Lower leg skin (tissue), 4 donors: ENCODE measurements at regions of chr3 and their contacts with region 1.

Region 1: GRCh38 chr3:144128108-144128892 is 156.7 kb downstream of the DIPK2A start:
- DNase-seq: no peak
- H3K4me3 ChIP-seq: no peak overlapping the region
- CTCF ChIP-seq: no peak
- POLR2A ChIP-seq: no peak

Region 2: DNA sequence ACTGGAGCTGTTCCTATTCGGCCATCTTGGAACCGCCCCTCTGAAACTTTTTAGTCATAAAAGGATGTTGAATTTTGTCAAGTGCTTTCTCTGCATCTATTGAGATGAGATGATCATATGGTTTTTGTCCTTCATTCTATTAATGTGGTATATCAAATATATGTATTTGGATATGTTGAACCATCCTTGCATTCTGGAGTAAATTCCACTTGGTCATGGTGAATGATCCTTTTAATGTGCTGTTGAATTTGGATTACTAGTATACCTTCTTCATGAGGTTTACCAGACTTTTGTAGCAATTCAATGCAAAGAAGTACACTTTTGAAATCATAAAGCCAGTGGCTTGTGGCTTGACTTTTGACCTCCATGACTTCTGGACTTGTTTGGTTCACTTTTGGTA is 1647.1 kb before region 1 on chr3:
- intact Hi-C with region 1: no loop called
- DNase-seq: no peak
- H3K4me3 ChIP-seq: no peak overlapping the region
- CTCF ChIP-seq: no peak
- POLR2A ChIP-seq: no peak

Region 3: GRCh38 chr3:143119009-143119914 is 1009.0 kb before region 1 on chr3 and contains the start of gene CHST2:
- intact Hi-C with region 1: no loop called
- DNase-seq: peak in 1 of 2 donors; percentile 86
- H3K4me3 ChIP-seq: peak within 1 kb of the TSS; percentile 54
- CTCF ChIP-seq: no peak
- POLR2A ChIP-seq: no peak
- total RNA-seq, gene CHST2: 2.2 to 14.7 (median 4.4) TPM

Region 4: DNA sequence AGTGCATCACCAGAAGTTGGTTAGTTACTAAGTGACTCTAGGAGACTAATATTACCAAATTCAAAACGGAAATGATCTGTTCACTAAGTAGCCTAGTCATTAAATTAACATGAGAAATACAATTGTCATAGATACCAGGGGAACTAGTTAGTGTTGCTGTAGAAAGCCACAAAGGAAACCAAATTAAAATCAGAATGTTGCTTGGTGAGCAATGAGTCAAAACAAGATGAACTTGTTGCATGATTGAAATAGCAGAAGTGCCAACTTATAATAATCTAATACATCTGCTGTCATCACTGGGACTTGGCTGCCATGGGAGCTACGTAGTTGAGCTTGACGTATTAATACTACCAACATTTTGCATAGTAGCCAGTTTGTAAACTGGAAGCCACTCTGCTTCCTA is 301.4 kb after region 1 on chr3:
- intact Hi-C with region 1: loop called (anchors 10 kb)
- DNase-seq: no peak
- H3K4me3 ChIP-seq: no peak overlapping the region
- CTCF ChIP-seq: no peak
- POLR2A ChIP-seq: no peak